PC-9 (cell line): ENCODE measurements at regions of chr4 and their contacts with region 1.

Region 1: GRCh38 chr4:85798012-85798770 is 323.2 kb downstream of the ARHGAP24 start:
- DNase-seq: no peak
- H3K4me3 ChIP-seq: no peak overlapping the region
- H3K27ac ChIP-seq: no peak overlapping the region
- H3K4me1 ChIP-seq: no peaks in the 10 kb centered on the region; the same call in 1 of the 2 replicates
- H3K27me3 ChIP-seq: no peaks in the 10 kb centered on the region
- CTCF ChIP-seq: no peak

Region 2: GRCh38 chr4:85772470-85772869 is 25.7 kb before region 1 on chr4:
- CTCF ChIA-PET with region 1: no interaction called
- POLR2A ChIA-PET with region 1: no interaction called
- intact Hi-C with region 1: no loop called
- DNase-seq: no peak
- H3K4me3 ChIP-seq: no peak overlapping the region
- H3K27ac ChIP-seq: no peak overlapping the region
- H3K4me1 ChIP-seq: peaks cover 5% of the 10 kb centered on the region; the same call in 1 of the 2 replicates
- H3K27me3 ChIP-seq: no peaks in the 10 kb centered on the region
- CTCF ChIP-seq: no peak

Region 3: GRCh38 chr4:86043755-86044592 is 245.8 kb after region 1 on chr4:
- CTCF ChIA-PET with region 1: interaction called, 3 read pairs
- POLR2A ChIA-PET with region 1: no interaction called
- intact Hi-C with region 1: loop called (anchors 2 kb)
- DNase-seq: no peak
- H3K4me3 ChIP-seq: no peak overlapping the region
- H3K27ac ChIP-seq: no peak overlapping the region
- H3K4me1 ChIP-seq: no peaks in the 10 kb centered on the region
- H3K27me3 ChIP-seq: no peaks in the 10 kb centered on the region
- CTCF ChIP-seq: peak; percentile 76